K562 (cell line): ENCODE measurements at regions of chr7 and their contacts with region 1.

Region 1: GRCh38 chr7:51141451-51142003 is 175.1 kb downstream of the COBL start:
- DNase-seq: peak in 2 of 4 experiments; percentile 5 to 12
- ATAC-seq: no peak
- H3K4me3 ChIP-seq: no peak overlapping the region
- H3K27ac ChIP-seq: no peak overlapping the region
- H3K4me1 ChIP-seq: no peaks in the 10 kb centered on the region
- H3K27me3 ChIP-seq: peaks cover 0 to 4% of the 10 kb centered on the region in 2 experiments; a peak in 2 of 5 replicates
- CTCF ChIP-seq: peak; percentile 36 to 64 (median 48); a peak in 5 of 6 replicates
- EP300 ChIP-seq: no peak
- POLR2A ChIP-seq: no peak
- RAD21 ChIP-seq: peak in 1 of 2 experiments; percentile 53; a peak in 3 of 4 replicates

Region 2: GRCh38 chr7:50449881-50450589 is 691.5 kb before region 1 on chr7 and contains the start of gene FIGNL1:
- CTCF ChIA-PET with region 1: no interaction called
- POLR2A ChIA-PET with region 1: no interaction called
- in situ Hi-C with region 1: loop called (anchors 10 kb)
- intact Hi-C with region 1: no loop called
- DNase-seq: peak; percentile 80 to 89 (median 84)
- ATAC-seq: peak; percentile 99
- H3K4me3 ChIP-seq: peak within 1 kb of the TSS; percentile 73
- H3K27ac ChIP-seq: peak within 1 kb of the TSS; percentile 75
- H3K4me1 ChIP-seq: peaks cover 3 to 12% of the 10 kb centered on the region in 2 experiments; a peak in 4 of 5 replicates
- H3K27me3 ChIP-seq: peaks cover 6% of the 10 kb centered on the region in 2 experiments; a peak in 4 of 5 replicates
- CTCF ChIP-seq: no peak
- EP300 ChIP-seq: no peak
- POLR2A ChIP-seq: peak; percentile 81
- RAD21 ChIP-seq: no peak
- polyA plus RNA-seq, gene FIGNL1: 15.5 to 22.7 TPM

Region 3: DNA sequence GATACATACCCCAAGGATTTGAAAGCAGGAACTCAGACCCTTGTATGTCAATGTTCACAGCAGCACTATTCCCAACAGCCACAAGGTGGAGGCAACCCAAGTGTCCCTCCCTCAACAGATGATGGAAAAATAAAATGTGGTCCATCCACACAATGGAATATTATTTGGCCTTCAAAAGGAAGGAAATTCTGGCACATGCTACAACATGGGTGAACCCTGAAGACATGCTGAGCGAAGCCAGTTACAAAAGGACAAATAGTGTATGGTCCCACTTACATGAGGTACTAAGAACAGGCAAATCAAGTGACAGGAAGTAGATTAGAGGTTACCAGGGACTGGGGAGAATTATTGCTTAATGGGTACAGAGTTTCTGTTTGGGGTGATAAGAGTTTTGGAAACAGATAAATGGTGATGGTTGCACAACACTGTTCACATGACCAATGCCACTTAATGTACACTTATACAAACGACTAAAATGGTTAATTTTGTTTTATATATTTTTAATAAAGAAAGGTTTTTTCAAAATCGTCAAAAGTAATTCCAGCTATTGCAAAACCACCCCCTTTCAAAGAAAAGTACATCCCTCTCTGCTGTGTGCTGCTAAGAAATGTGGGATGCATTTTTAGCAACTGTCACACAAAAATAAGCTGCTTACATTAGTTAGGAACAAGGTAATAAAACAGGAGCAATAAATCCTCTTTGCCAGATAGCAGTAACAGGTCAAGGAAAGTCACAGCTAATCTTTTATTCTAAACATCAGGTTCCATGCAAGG is 444.5 kb before region 1 on chr7:
- CTCF ChIA-PET with region 1: no interaction called
- POLR2A ChIA-PET with region 1: no interaction called
- in situ Hi-C with region 1: no loop called
- intact Hi-C with region 1: loop called (anchors 5 kb)
- DNase-seq: peak in 1 of 4 experiments; percentile 51
- ATAC-seq: peak; percentile 87
- H3K4me3 ChIP-seq: no peak overlapping the region
- H3K27ac ChIP-seq: no peak overlapping the region
- H3K4me1 ChIP-seq: peaks cover 3 to 16% of the 10 kb centered on the region in 2 experiments; a peak in 4 of 5 replicates
- H3K27me3 ChIP-seq: no peaks in the 10 kb centered on the region
- CTCF ChIP-seq: peak; percentile 55 to 68 (median 64); a peak in 5 of 6 replicates
- EP300 ChIP-seq: peak; percentile 78
- POLR2A ChIP-seq: no peak
- RAD21 ChIP-seq: peak; percentile 46 to 67; a peak in 3 of 4 replicates

Region 4: GRCh38 chr7:51308265-51308664 is 166.7 kb after region 1 on chr7:
- CTCF ChIA-PET with region 1: no interaction called
- POLR2A ChIA-PET with region 1: no interaction called
- in situ Hi-C with region 1: no loop called
- intact Hi-C with region 1: no loop called
- DNase-seq: no peak
- ATAC-seq: no peak
- H3K4me3 ChIP-seq: no peak overlapping the region
- H3K27ac ChIP-seq: no peak overlapping the region
- H3K4me1 ChIP-seq: no peaks in the 10 kb centered on the region
- H3K27me3 ChIP-seq: peaks cover 22 to 42% of the 10 kb centered on the region in 2 experiments
- CTCF ChIP-seq: no peak
- EP300 ChIP-seq: no peak
- POLR2A ChIP-seq: no peak
- RAD21 ChIP-seq: no peak